Activated CD4-positive, alpha-beta T cell treated with anti-CD3 and anti-CD28 coated beads, Interleukin-2, amount 10 ng/mL, durations not matched to agents 7 days and 5 days (primary cell): ENCODE measurements at regions of chr6 and their contacts with region 1.

Region 1: DNA sequence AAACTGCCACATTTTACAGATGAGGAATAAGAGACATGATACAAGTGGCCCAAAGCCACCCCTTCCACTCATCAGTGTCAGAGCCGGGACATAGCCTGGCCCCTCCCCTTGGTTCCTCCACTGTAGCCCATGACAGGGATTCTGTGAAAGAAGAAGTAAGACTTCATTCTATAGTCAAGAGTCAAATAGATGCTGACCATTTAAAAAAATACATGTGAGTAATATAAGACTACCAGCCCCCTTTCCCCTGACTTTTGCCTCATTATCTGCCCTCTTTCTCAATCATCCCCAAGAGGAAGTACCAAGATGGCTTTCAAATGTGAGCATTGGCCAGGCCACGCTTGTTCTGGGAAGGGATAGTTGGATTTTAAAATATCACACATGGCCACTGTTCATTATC is 57.8 kb upstream of the TAB2 start:
- DNase-seq: no peak
- H3K4me3 Mint-ChIP-seq: no peak overlapping the region
- H3K27ac Mint-ChIP-seq: no peak overlapping the region
- H3K4me1 Mint-ChIP-seq: peaks cover 45% of the 10 kb centered on the region
- H3K27me3 Mint-ChIP-seq: no peaks in the 10 kb centered on the region

Region 2: GRCh38 chr6:148926478-148926877 is 333.3 kb before region 1 on chr6:
- CTCF ChIA-PET with region 1: no interaction called
- POLR2A ChIA-PET with region 1: no interaction called
- DNase-seq: no peak
- H3K4me3 Mint-ChIP-seq: no peak overlapping the region
- H3K27ac Mint-ChIP-seq: no peak overlapping the region
- H3K4me1 Mint-ChIP-seq: no peaks in the 10 kb centered on the region
- H3K27me3 Mint-ChIP-seq: peaks cover 1% of the 10 kb centered on the region

Region 3: DNA sequence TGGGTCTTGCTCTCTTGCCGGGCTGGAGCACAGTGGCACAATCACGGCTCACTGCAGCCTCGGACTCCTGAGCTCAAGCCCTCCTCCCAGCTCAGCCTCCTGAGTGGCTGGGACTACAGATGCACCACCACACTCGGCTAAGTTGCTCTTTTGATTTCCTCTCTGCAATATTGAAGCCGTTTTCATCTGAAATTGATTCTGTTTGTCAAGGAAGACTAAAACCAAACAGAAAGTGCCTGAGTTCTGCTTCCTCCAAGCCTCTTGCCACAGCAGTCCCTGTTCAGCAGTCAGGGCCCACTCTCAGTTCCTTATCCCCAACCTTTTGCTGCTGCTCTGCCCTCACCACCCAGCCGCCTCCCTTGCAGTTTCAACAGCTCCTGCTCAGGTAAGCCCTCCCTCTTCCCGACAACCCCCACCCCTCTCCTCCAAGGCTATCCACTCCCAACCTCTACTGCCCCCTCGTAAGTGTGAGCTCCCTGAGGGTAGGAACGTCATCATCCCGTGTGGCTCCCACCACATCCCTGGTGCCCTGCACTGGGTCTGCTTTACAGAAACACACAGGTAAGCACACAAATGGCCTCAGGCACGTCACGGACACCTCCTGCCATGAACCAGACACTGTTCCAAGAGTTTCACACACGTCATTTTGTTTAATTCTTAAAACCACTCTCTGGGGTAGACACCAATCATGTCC is 12.9 kb before region 1 on chr6:
- CTCF ChIA-PET with region 1: interaction called, 11 read pairs
- POLR2A ChIA-PET with region 1: no interaction called
- DNase-seq: no peak
- H3K4me3 Mint-ChIP-seq: no peak overlapping the region
- H3K27ac Mint-ChIP-seq: peak overlapping the region; percentile 80
- H3K4me1 Mint-ChIP-seq: peaks cover 47% of the 10 kb centered on the region
- H3K27me3 Mint-ChIP-seq: no peaks in the 10 kb centered on the region

Region 4: GRCh38 chr6:149271348-149272340 is 11.9 kb after region 1 on chr6:
- CTCF ChIA-PET with region 1: interaction called, 10 read pairs
- POLR2A ChIA-PET with region 1: no interaction called
- DNase-seq: peak; percentile 24
- H3K4me3 Mint-ChIP-seq: peak overlapping the region; percentile 42
- H3K27ac Mint-ChIP-seq: peak overlapping the region; percentile 21
- H3K4me1 Mint-ChIP-seq: peaks cover 44% of the 10 kb centered on the region
- H3K27me3 Mint-ChIP-seq: no peaks in the 10 kb centered on the region